Mammary epithelial cell (primary cell): ENCODE measurements at regions of chr9 and their contacts with region 1.

Region 1: DNA sequence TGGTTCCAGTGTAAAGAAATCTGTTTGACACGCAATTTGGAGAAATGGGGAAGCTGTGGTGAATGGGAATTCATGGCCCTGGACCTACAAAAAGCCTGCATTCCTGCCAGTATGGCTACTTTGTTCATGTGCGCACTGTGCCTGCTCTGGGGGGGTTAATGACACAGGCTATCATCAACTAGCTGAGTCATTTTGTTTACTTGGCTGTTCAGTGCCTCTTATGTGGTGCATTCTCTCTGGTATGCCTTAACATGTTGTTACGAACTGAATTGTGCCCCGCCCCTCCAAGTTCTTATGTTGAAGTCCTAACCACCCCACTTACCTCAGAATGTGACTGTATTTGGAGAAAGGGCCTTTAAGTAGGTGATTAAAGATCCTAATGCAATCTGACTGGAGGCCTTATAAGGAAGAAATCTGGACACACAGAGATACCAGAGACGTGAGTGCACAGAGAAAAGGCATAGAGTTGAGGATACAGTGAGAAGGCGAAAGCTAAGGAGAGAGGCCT is 20.4 kb upstream of the UBAP1 start:
- DNase-seq: peak; percentile 96
- H3K4me3 ChIP-seq: no peak overlapping the region
- H3K27ac ChIP-seq: peak overlapping the region; percentile 9
- H3K4me1 ChIP-seq: peaks cover 14% of the 10 kb centered on the region
- H3K27me3 ChIP-seq: no peaks in the 10 kb centered on the region
- CTCF ChIP-seq: no peak

Region 2: DNA sequence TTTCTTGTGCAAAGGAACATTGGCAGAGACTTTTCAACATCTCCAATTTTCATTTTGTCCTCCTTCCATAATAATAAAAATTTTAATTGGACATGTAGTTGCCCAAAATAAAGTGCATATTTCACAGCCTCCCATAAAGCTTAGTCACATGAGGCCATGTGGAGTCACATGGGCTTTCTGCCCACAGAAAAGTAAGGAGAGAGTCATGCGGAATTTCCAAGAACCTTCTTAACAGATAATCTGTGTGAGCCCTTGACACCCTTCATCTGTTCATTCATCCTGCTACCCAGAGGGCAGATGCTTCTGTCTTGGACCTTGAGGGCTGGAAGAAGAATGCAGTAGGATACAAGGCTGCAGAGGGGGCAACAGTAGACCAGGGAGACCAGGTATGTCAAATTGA is 1217.7 kb before region 1 on chr9:
- CTCF ChIA-PET with region 1: no interaction called
- dilution Hi-C with region 1: no loop called
- in situ Hi-C with region 1: no loop called
- intact Hi-C with region 1: no loop called
- DNase-seq: peak; percentile 26
- H3K4me3 ChIP-seq: no peak overlapping the region
- H3K27ac ChIP-seq: no peak overlapping the region
- H3K4me1 ChIP-seq: peaks cover 3% of the 10 kb centered on the region
- H3K27me3 ChIP-seq: no peaks in the 10 kb centered on the region
- CTCF ChIP-seq: no peak

Region 3: GRCh38 chr9:34001298-34001697 is 157.1 kb before region 1 on chr9:
- CTCF ChIA-PET with region 1: no interaction called
- dilution Hi-C with region 1: no loop called
- in situ Hi-C with region 1: no loop called
- intact Hi-C with region 1: no loop called
- DNase-seq: no peak
- H3K4me3 ChIP-seq: no peak overlapping the region
- H3K27ac ChIP-seq: no peak overlapping the region
- H3K4me1 ChIP-seq: no peaks in the 10 kb centered on the region
- H3K27me3 ChIP-seq: no peaks in the 10 kb centered on the region
- CTCF ChIP-seq: no peak

Region 4: DNA sequence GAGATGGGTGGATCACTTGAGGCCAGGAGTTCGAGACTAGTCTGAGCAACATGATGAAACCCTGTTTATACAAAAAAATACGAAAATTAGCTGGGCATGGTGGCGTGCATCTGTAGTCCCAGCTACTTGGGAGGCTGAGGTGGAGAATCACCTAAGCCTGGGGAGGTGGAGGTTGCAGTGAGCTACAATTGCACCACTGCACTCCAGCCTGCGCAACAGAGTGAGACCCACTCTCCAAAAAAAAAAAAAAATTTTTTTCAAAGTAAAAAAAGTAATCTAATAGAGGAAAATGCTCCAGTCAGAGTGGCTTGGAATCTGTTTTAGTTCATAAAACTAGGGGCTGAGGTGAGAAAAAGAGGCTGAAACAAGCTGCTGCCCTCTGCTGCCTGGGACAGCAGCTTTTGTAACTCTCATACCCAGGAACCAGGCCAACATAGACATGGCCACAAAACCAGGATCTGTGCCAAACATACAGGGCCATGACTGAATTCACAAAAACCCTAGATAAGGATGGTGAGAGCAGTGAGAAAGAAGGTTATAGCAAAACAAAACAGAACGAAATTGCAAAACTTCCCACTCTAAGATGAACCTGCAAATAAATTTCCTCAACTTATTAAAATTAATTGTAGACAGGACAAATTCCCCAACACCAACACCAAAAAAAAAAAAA is 18.8 kb before region 1 on chr9:
- CTCF ChIA-PET with region 1: interaction called, 15 read pairs
- dilution Hi-C with region 1: no loop called
- in situ Hi-C with region 1: no loop called
- intact Hi-C with region 1: no loop called
- DNase-seq: peak; percentile 60
- H3K4me3 ChIP-seq: no peak overlapping the region
- H3K27ac ChIP-seq: no peak overlapping the region
- H3K4me1 ChIP-seq: no peaks in the 10 kb centered on the region
- H3K27me3 ChIP-seq: no peaks in the 10 kb centered on the region
- CTCF ChIP-seq: peak; percentile 29 to 47

Region 5: GRCh38 chr9:34178520-34179212 is 20.2 kb after region 1 on chr9 and contains the start of gene UBAP1:
- CTCF ChIA-PET with region 1: interaction called, 6 read pairs
- dilution Hi-C with region 1: no loop called
- in situ Hi-C with region 1: no loop called
- intact Hi-C with region 1: loop called (anchors 1 kb)
- DNase-seq: peak; percentile 98
- H3K4me3 ChIP-seq: peak within 1 kb of the TSS; percentile 69 to 80 (median 79)
- H3K27ac ChIP-seq: peak within 1 kb of the TSS; percentile 83
- H3K4me1 ChIP-seq: peaks cover 17% of the 10 kb centered on the region
- H3K27me3 ChIP-seq: no peaks in the 10 kb centered on the region
- CTCF ChIP-seq: no peak
- total RNA-seq, gene UBAP1: 68.4 to 71.8 TPM

Region 6: DNA sequence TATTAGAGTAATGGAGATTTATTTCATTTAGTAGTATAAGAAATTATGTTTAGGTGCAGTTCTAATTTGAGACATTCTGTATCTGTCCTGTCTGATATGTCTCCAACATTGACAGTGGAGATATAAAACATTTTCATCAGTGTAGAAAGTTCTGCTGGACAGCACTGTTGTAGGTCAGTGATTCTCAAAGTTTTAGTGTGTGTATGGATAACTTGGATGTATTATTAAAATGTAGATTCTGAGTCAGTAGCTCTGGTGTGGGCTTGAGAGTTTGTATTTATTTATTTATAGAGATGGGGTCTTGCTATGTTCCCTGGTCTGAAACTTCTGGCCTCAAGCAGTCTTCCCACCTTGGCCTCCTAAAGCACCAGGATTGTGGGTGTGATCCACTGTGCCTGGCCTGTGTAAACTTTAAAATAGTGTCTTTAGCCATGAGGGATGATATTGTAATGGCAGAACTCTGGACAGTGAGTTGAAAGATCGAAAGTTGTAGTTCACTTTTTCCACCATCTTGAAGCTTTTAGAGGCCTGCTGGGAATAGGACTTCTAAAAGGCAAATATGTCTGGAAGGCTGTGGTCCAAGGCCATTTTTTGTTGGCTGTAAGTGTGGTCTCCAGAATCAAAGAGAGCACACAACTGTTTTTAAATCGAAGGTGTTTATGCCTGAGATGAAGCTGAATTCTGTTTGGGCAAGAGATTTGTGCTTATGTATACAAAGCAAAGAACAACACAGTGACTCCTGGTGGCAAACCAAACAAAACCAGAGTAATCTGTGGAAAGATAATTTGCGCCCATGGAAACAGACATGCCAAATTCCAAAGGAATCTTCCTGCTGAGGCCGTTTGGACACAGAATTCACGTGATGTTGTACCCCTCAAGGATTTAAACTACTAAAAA is 32.8 kb after region 1 on chr9:
- CTCF ChIA-PET with region 1: no interaction called
- dilution Hi-C with region 1: loop called (anchors 5 kb)
- in situ Hi-C with region 1: no loop called
- intact Hi-C with region 1: no loop called
- DNase-seq: no peak
- H3K4me3 ChIP-seq: no peak overlapping the region
- H3K27ac ChIP-seq: no peak overlapping the region
- H3K4me1 ChIP-seq: peaks cover 11% of the 10 kb centered on the region
- H3K27me3 ChIP-seq: no peaks in the 10 kb centered on the region
- CTCF ChIP-seq: peak in 1 of 2 donors; percentile 39